BJ (cell line): ENCODE measurements at regions of chr17 and their contacts with region 1.

Region 1: GRCh38 chr17:13129356-13129755 is 111.5 kb upstream of the ELAC2 start:
- DNase-seq: no peak
- H3K4me3 ChIP-seq: no peak overlapping the region
- H3K27me3 ChIP-seq: no peaks in the 10 kb centered on the region
- CTCF ChIP-seq: no peak

Region 2: DNA sequence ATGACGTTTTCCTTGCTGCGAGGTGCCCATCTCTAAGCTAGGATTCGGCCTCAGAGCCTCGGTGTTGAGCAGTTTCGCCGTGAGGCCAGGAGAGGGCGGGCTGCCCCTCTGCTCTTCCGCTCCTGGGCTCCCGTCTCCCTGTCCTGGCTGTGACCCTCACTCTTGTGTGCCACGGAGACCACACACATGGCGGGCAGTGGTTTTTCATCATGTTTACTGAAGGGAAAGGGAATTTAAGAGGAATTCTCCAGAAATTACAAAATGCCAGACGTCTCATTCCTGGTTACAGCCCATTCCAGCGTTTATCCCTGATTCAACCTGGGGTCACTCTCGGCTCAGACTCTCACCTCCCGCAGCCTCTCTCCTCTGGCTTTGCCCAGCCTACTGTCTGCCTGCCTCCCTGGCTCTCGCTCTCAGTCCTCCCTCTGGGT is 14.7 kb before region 1 on chr17:
- CTCF ChIA-PET with region 1: interaction called, 11 read pairs
- POLR2A ChIA-PET with region 1: no interaction called
- DNase-seq: peak; percentile 4
- H3K4me3 ChIP-seq: 0 out of 2 replicates have a peak overlapping the region, but pooled peaks have one; percentile 11
- H3K27me3 ChIP-seq: no peaks in the 10 kb centered on the region
- CTCF ChIP-seq: peak; percentile 93